Activated CD4-positive, alpha-beta T cell treated with anti-CD3 and anti-CD28 coated beads for 36 hours (primary cell): ENCODE measurements at regions of chr1 and their contacts with region 1.

Region 1: DNA sequence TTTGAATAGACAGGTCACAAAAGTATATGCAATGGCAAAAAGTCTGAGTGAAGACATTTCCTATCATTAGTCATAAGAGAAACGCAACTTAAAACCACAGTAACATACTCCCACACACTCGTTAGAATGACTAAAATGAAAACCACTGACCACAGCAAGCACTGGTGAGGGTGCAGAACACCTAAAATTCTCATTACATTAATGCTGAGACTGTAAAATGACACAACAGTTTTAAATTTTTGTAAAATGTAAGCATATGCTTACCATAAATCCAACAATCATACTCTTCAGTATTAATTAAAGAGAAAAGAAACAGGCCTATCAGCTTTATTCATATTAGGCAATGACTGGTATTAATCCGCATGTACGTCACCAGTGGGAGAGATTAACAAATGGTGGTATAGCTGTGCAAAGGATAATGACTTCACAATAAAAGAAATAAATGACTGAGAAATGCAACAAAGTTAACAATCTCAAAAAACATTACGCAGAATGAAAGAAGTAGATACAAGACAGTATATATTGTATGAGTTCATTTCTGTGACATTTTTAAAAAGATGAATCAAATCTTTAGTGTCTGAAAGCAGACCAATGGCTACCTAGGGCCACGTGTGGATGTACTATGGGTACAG is 253.5 kb downstream of the AKT3 start:
- DNase-seq: peak; percentile 51
- ATAC-seq: peak; percentile 61
- H3K4me3 Mint-ChIP-seq: peak overlapping the region; percentile 23
- H3K27ac Mint-ChIP-seq: peak overlapping the region; percentile 79
- H3K4me1 Mint-ChIP-seq: peaks cover 30% of the 10 kb centered on the region
- H3K27me3 Mint-ChIP-seq: no peaks in the 10 kb centered on the region

Region 2: DNA sequence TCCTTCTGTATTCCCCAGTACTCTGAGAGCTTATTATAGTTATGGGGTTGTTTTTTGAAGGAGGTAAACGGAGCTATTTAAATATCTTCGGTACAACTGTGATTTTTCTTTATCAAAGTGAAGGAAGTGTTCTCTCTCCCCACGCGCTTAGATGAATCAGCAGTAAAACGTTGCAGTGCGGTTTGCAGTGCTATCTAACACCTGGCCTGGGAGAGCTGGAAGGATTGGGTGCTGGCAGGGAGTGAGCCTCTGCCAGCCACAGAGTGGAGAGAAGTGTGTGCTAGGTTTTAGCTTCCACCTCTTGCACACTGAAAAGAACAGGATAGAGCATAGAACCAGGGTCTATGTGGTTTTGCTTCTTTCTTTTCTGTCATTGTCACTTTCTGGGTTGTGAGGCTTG is 174.8 kb before region 1 on chr1:
- CTCF ChIA-PET with region 1: no interaction called
- POLR2A ChIA-PET with region 1: no interaction called
- intact Hi-C with region 1: loop called (anchors 2 to 5 kb)
- DNase-seq: peak; percentile 78
- ATAC-seq: peak; percentile 99
- H3K4me3 Mint-ChIP-seq: peak overlapping the region; percentile 34
- H3K27ac Mint-ChIP-seq: peak overlapping the region; percentile 38
- H3K4me1 Mint-ChIP-seq: peaks cover 26% of the 10 kb centered on the region
- H3K27me3 Mint-ChIP-seq: no peaks in the 10 kb centered on the region

Region 3: GRCh38 chr1:243667591-243667990 is 71.0 kb after region 1 on chr1:
- CTCF ChIA-PET with region 1: no interaction called
- POLR2A ChIA-PET with region 1: no interaction called
- intact Hi-C with region 1: no loop called
- DNase-seq: no peak
- ATAC-seq: no peak
- H3K4me3 Mint-ChIP-seq: no peak overlapping the region
- H3K27ac Mint-ChIP-seq: peak overlapping the region; percentile 33
- H3K4me1 Mint-ChIP-seq: peaks cover 5% of the 10 kb centered on the region
- H3K27me3 Mint-ChIP-seq: no peaks in the 10 kb centered on the region

Region 4: GRCh38 chr1:243748706-243749283 is 152.2 kb after region 1 on chr1:
- CTCF ChIA-PET with region 1: no interaction called
- POLR2A ChIA-PET with region 1: no interaction called
- intact Hi-C with region 1: no loop called
- DNase-seq: no peak
- ATAC-seq: peak; percentile 98
- H3K4me3 Mint-ChIP-seq: no peak overlapping the region
- H3K27ac Mint-ChIP-seq: no peak overlapping the region
- H3K4me1 Mint-ChIP-seq: peaks cover 28% of the 10 kb centered on the region
- H3K27me3 Mint-ChIP-seq: no peaks in the 10 kb centered on the region

Region 5: GRCh38 chr1:243837907-243838535 is 241.5 kb after region 1 on chr1:
- CTCF ChIA-PET with region 1: no interaction called
- POLR2A ChIA-PET with region 1: no interaction called
- intact Hi-C with region 1: loop called (anchors 1 to 5 kb)
- DNase-seq: no peak
- ATAC-seq: peak; percentile 94
- H3K4me3 Mint-ChIP-seq: no peak overlapping the region
- H3K27ac Mint-ChIP-seq: peak overlapping the region; percentile 60
- H3K4me1 Mint-ChIP-seq: peaks cover 39% of the 10 kb centered on the region
- H3K27me3 Mint-ChIP-seq: no peaks in the 10 kb centered on the region

Region 6: DNA sequence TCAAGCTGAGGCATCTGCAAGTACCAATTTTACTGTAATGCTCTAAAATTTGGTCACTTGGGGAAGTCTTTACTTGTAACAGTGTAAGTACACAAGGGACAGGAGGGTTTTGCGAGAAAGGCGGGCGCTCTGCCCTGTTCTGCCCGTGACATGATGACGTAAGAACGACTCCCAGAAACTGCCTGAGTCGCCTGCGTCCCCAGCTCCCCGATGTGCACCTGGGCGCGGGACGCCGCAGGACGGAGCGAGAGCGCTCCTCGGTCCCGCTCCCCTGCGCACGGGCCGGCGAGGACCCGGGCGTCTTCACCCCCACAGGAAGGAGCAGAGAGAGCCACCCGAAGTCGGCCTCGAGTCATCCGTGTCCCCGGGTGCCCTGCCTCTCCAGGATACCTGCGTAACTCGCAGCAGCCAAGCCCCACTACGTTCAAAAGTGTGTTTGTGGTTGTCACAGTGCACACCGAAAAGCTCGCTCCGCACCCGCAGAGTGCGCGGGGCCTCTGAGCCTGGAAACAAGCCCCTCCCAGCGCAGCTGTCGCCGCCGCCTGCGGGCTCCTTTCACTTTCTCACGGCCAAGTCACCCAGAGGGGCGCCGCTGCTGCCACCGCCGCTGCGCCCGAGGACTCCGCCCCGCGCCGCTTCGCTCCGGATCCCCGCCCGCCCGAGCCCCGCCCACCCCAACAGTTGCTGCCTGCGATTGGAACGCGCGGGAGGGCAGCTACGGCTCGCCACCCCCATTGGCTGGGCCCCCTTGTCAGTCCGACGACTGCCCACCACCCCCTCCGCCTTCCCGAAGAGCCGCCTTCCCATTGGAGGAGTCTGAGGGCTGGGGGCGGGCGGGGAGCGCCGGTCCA is 451.3 kb after region 1 on chr1:
- CTCF ChIA-PET with region 1: no interaction called
- POLR2A ChIA-PET with region 1: no interaction called
- intact Hi-C with region 1: loop called in 1 of 2 experiments (anchors 2 kb)
- DNase-seq: peak; percentile 98
- ATAC-seq: peak; percentile 92
- H3K4me3 Mint-ChIP-seq: peak overlapping the region; percentile 93
- H3K27ac Mint-ChIP-seq: peak overlapping the region; percentile 97
- H3K4me1 Mint-ChIP-seq: peaks cover 35% of the 10 kb centered on the region
- H3K27me3 Mint-ChIP-seq: no peaks in the 10 kb centered on the region